Activated CD4-positive, alpha-beta T cell treated with anti-CD3 and anti-CD28 coated beads, Interleukin-2, amount 10 ng/mL, durations not matched to agents 24 days and 14 days (primary cell): ENCODE measurements at regions of chr9 and their contacts with region 1.

Region 1: DNA sequence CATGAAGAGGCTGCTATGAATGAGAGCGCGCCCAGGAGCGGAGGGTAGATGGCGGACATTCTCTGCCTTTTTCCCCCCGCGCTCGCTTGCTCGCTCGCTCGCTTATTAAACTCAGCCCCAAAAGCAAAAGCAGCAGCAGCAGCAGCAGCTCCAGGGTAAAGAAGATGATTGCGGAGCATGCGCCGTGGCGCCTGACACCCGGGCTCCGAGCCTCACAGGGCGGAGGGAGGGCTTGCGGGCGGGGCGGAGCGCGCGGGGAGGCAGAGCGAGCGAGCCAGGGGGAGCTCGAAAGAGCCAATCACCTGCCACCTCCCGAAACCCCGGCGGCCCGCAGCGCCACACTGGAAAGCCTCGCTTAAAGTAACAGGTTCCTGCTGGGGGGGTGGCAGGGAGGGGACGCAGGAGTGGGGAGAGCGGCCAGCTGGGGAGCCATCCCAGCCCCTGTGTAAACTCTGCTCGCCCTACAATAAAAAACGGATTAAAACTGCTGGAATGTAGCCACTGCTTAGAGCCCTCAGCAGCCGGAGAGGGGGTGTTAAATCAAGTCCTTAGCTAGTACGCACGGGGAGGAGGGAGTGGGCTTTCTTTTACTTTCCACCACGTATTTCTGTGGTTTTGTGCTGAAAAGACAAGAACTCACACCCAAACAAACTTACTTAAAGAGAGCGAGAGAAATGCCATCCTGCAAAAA is at the start of gene MLLT3:
- DNase-seq: peak; percentile 99
- H3K4me3 Mint-ChIP-seq: peak within 1 kb of the TSS; percentile 92
- H3K27ac Mint-ChIP-seq: peak within 1 kb of the TSS; percentile 98
- H3K4me1 Mint-ChIP-seq: peaks cover 44% of the 10 kb centered on the region
- H3K27me3 Mint-ChIP-seq: no peaks in the 10 kb centered on the region
- total RNA-seq, gene MLLT3: 26.5 and 27.8 TPM in 2 replicates

Region 2: GRCh38 chr9:19976226-19976625 is 646.2 kb before region 1 on chr9:
- intact Hi-C with region 1: loop called (anchors 1 kb)
- DNase-seq: peak; percentile 81
- H3K4me3 Mint-ChIP-seq: peak overlapping the region; percentile 1
- H3K27ac Mint-ChIP-seq: peak overlapping the region; percentile 94
- H3K4me1 Mint-ChIP-seq: peaks cover 33% of the 10 kb centered on the region
- H3K27me3 Mint-ChIP-seq: no peaks in the 10 kb centered on the region

Region 3: DNA sequence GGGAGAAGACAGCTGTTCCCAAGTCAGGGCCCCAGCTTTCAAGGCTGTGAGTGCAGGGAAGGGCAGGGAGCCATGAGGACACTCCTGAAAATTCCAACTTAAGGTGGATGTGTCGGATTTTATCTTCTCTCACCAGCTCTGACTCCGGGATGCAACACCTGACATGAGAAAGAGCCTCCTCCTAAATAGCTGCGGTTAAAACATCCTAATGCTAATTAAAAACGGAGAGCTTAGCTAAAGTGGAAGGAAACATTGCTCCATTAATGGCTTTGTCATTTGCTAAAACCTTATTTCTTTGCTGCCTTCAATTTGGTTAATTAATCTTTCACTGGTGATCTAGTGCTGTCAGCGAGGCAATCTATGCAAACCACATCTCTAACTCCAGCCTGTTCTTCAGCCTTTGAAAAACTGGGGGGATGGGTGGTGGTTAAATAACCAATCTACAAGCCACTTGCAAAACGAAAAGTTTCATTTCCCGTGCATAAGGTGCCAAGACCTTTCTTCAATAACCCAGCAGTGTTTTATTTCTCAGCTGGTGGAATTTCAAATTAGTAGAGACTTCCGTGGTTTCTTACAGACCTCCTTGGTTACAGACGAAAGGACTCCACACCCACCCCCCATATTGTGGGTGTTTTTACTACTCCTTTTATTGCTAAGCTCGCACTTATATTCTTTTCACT is 379.8 kb before region 1 on chr9:
- intact Hi-C with region 1: loop called (anchors 5 kb)
- DNase-seq: peak; percentile 88
- H3K4me3 Mint-ChIP-seq: peak overlapping the region; percentile 77
- H3K27ac Mint-ChIP-seq: peak overlapping the region; percentile 61
- H3K4me1 Mint-ChIP-seq: peaks cover 58% of the 10 kb centered on the region
- H3K27me3 Mint-ChIP-seq: no peaks in the 10 kb centered on the region

Region 4: GRCh38 chr9:20442461-20443319 is 179.8 kb before region 1 on chr9:
- intact Hi-C with region 1: loop called (anchors 5 kb)
- DNase-seq: no peak
- H3K4me3 Mint-ChIP-seq: peak overlapping the region; percentile 13
- H3K27ac Mint-ChIP-seq: peak overlapping the region; percentile 3
- H3K4me1 Mint-ChIP-seq: peaks cover 32% of the 10 kb centered on the region
- H3K27me3 Mint-ChIP-seq: no peaks in the 10 kb centered on the region

Region 5: GRCh38 chr9:20604562-20604961 is 17.9 kb before region 1 on chr9:
- intact Hi-C with region 1: loop called (anchors 1 kb)
- DNase-seq: peak; percentile 71
- H3K4me3 Mint-ChIP-seq: peak overlapping the region; percentile 72
- H3K27ac Mint-ChIP-seq: peak overlapping the region; percentile 79
- H3K4me1 Mint-ChIP-seq: peaks cover 60% of the 10 kb centered on the region
- H3K27me3 Mint-ChIP-seq: no peaks in the 10 kb centered on the region

Region 6: GRCh38 chr9:20941174-20941690 is 318.8 kb after region 1 on chr9:
- intact Hi-C with region 1: loop called (anchors 1 kb)
- DNase-seq: peak; percentile 88
- H3K4me3 Mint-ChIP-seq: no peak overlapping the region
- H3K27ac Mint-ChIP-seq: no peak overlapping the region
- H3K4me1 Mint-ChIP-seq: peaks cover 3% of the 10 kb centered on the region
- H3K27me3 Mint-ChIP-seq: no peaks in the 10 kb centered on the region